ENCODE measurements at regions of chr1 and their contacts with region 1.

Region 1: DNA sequence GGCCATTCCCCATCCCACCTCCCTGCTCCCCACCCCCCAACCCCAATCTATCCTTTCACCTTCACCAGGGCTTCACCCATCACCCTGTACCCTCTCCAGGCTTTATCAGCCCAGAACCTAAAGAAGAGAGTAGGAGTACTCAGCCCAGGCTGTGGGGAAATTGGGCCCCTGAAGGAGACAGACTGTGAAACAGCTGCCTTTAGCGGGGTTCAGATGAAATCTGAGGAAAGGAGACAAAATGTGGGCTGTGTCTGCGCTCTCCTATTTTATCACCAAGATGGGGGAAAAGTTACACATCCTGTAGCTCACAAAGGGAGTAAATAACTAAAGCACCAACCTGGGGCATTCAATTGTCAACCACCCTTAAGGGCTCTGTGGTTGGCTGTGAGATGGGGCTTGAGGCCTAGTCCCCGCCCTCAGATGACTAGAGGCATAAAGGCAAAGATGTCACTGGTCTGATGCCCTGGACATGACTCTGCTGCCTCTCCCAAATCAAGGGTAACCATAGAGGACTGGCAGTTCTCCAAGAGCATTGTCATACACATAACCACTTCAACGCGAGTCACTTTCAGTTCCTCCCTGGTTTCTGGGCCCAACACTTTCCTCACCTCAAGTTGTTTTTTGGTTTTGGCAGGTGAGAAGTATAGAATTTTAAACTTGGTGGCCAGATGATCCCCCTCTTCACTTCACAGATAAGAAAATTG is 30.0 kb downstream of the SLC27A3 start:
- DNase-seq: peak; percentile 68
- H3K4me3 ChIP-seq: no peak overlapping the region
- H3K27ac ChIP-seq: peak overlapping the region; percentile 49 to 68 (median 62)
- H3K4me1 ChIP-seq: peaks cover 0 to 16% (median 3%) of the 10 kb centered on the region in 4 donors
- H3K27me3 ChIP-seq: no peaks in the 10 kb centered on the region
- CTCF ChIP-seq: no peak
- EP300 ChIP-seq: no peak
- POLR2A ChIP-seq: peak; percentile 15

Region 2: DNA sequence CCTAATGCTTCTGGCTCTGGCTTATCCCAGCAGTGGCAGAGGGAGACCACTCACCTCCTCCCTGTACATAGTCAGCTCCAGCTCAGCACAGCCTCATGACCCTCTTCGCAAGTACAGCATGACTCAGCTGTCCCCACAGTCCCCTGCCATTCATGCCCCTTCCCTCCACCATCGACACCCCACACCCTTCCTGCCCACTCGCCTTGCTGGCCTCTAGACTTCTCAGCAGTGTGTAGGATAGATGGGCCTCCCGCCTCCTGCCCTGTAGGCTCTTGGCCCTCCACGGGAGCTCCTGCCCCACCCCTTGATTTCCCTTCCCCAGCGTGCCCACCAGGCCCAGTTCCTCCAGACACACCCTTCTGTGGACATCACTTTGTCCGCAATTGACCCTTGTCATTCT is 116.9 kb before region 1 on chr1:
- in situ Hi-C with region 1: no loop called
- intact Hi-C with region 1: no loop called
- DNase-seq: no peak
- H3K4me3 ChIP-seq: no peak overlapping the region
- H3K27ac ChIP-seq: no peak overlapping the region
- H3K4me1 ChIP-seq: no peaks in the 10 kb centered on the region
- H3K27me3 ChIP-seq: no peaks in the 10 kb centered on the region
- CTCF ChIP-seq: no peak
- EP300 ChIP-seq: no peak
- POLR2A ChIP-seq: no peak

Region 3: GRCh38 chr1:153922972-153923925 is 118.1 kb after region 1 on chr1 and contains the start of gene GATAD2B:
- in situ Hi-C with region 1: loop called in 3 of 4 experiments (anchors 25 kb)
- intact Hi-C with region 1: no loop called
- DNase-seq: peak; percentile 99
- H3K4me3 ChIP-seq: peak within 1 kb of the TSS; percentile 86 to 97 (median 90)
- H3K27ac ChIP-seq: peak within 1 kb of the TSS; percentile 95 to 99 (median 96)
- H3K4me1 ChIP-seq: peaks cover 11 to 45% (median 30%) of the 10 kb centered on the region in 4 donors
- H3K27me3 ChIP-seq: no peaks in the 10 kb centered on the region
- CTCF ChIP-seq: no peak
- EP300 ChIP-seq: no peak
- POLR2A ChIP-seq: no peak
- total RNA-seq, gene GATAD2B: 16.7 to 28.1 (median 20.2) TPM

Region 4: DNA sequence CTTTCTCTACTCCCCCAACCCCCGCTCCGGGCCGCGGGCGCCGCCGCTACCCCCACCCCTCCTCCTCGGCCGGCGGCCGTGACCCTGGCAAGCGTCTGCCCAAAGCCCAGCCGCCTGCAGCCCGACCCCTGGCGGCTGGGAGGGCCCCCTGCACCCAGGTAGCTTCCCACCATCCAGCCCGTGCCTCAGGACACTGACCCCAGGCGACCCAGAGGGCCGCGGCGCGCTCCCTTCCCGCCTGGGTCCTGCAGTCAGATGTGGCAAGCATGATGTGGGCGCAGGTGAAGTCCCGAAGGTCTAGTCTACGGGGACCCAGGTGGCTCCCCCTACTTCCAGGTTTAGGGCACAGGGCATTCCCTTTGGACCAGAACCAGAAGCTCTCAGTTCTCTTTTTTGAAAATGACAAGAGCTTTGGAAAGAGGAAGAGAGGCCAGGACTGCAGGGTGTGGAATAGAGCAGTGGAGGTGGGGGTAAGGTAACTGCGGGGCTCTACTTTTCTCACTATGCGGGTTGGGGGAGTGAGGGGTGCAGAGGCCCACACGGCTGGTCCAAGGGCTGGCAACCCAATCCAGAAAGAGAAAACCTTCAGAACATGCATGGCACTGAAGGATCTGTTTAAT is 141.5 kb after region 1 on chr1 and contains the start of gene DENND4B:
- in situ Hi-C with region 1: loop called in 2 of 4 experiments (anchors 25 kb)
- intact Hi-C with region 1: no loop called
- DNase-seq: peak; percentile 86
- H3K4me3 ChIP-seq: peak within 1 kb of the TSS; percentile 79 to 97 (median 92)
- H3K27ac ChIP-seq: peak within 1 kb of the TSS; percentile 97 to 99 (median 99)
- H3K4me1 ChIP-seq: peaks cover 0 to 15% (median 11%) of the 10 kb centered on the region in 4 donors
- H3K27me3 ChIP-seq: no peaks in the 10 kb centered on the region
- CTCF ChIP-seq: peak; percentile 90 to 98 (median 95)
- EP300 ChIP-seq: no peak
- POLR2A ChIP-seq: no peak
- total RNA-seq, gene DENND4B: 42.3 to 121 (median 50.3) TPM

Region 5: DNA sequence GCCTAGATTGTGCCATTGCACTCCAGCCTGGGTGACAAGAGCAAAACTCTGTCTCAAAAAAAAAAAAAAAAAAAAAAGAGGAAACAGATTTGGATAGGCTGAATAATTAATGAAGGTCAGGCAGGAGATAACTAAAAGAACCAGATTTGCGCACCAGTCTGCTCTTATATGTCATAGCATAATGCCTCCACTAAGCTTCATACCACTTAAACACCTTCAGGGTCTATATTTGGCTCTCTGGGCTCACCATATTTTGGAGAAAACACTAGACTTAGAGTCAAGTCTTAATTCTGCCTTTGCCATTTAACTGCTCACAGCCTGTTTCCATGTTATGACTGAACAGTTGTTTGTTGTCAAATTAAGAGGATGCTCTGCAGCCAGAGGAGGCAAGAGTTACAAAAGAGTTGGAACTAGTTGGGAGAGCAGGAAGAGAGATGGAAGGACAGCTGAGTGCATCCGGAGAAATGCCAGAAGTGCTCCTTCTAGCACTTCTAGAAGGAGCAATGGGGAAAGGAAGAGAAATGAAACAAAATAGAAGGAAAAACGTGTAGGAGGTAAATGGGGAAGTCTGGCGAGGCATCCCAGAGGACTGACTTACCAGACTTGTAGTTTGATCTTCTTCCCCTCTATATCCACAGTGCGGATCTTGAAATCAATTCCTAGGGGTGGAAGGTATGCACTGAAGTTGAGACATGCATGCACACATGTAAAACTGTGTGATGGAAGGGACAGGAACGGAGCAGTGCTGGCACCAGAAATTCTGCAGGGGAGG is 179.1 kb after region 1 on chr1:
- in situ Hi-C with region 1: loop called in 2 of 4 experiments (anchors 5 to 10 kb)
- intact Hi-C with region 1: no loop called
- DNase-seq: no peak
- H3K4me3 ChIP-seq: peak overlapping the region in 1 of 4 donors; percentile 67
- H3K27ac ChIP-seq: peak overlapping the region; percentile 86 to 96 (median 86)
- H3K4me1 ChIP-seq: peaks cover 0 to 29% (median 14%) of the 10 kb centered on the region in 4 donors
- H3K27me3 ChIP-seq: no peaks in the 10 kb centered on the region
- CTCF ChIP-seq: no peak
- EP300 ChIP-seq: no peak
- POLR2A ChIP-seq: no peak